ENCODE measurements at regions of chr4 and their contacts with region 1.

Region 1: DNA sequence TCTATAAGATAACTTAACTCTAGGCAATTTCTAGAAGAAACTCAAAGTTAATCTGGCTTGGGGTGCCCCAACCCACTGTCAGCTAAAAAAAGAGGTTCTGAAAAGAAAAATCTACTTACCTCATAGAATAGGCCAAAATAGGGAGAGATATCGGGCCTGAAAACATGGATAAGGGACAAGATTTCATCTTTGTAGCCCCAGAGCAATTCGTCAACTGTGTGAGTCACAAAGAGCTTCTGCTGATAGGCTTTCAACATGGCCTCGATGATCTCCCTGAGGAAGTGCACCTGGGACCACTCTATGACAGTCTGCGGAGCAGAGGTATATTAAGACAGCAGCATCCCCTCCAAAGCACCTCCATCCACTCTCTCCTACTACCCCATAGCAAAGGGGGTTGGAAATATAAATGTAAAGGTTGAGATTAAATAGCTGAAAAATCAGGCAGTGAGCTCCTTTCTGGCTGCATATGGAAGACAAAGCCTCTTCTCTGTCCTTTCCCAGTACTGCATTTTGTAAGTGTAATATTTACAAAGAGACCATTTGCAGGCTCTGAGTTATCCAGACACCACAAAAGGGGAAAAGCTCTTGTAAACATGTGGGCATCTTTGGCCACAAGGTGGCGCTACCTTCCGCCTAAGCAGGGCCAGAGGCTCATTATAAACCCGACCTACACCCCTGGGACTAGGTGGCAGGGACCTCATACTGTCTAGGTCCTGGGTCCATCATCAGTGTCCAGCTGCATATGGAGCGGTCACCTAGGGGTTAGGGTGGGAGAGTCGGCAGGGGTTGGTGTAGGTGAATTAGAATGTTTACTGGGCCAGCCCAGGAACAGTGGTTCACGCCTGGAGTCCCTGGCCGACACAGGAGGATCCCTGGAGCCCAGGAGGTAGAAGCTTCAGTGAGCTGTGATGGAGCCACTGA is 31.5 kb upstream of the NUP54 start:
- DNase-seq: peak; percentile 79
- H3K4me3 ChIP-seq: no peak overlapping the region; a peak in 1 of 4 replicates
- H3K27ac ChIP-seq: no peak overlapping the region; a peak in 1 of 4 replicates
- H3K4me1 ChIP-seq: peaks cover 0 to 2% of the 10 kb centered on the region in 2 experiments; a peak in 1 of 4 replicates
- H3K27me3 ChIP-seq: no peaks in the 10 kb centered on the region
- CTCF ChIP-seq: peak; percentile 95
- EP300 ChIP-seq: no peak
- RAD21 ChIP-seq: peak; percentile 95

Region 2: GRCh38 chr4:76168688-76169087 is 11.0 kb before region 1 on chr4:
- CTCF ChIA-PET with region 1: interaction called, 35 read pairs
- POLR2A ChIA-PET with region 1: no interaction called
- DNase-seq: no peak
- H3K4me3 ChIP-seq: no peak overlapping the region
- H3K27ac ChIP-seq: no peak overlapping the region
- H3K4me1 ChIP-seq: no peaks in the 10 kb centered on the region
- H3K27me3 ChIP-seq: no peaks in the 10 kb centered on the region
- CTCF ChIP-seq: no peak
- EP300 ChIP-seq: no peak
- RAD21 ChIP-seq: no peak

Region 3: DNA sequence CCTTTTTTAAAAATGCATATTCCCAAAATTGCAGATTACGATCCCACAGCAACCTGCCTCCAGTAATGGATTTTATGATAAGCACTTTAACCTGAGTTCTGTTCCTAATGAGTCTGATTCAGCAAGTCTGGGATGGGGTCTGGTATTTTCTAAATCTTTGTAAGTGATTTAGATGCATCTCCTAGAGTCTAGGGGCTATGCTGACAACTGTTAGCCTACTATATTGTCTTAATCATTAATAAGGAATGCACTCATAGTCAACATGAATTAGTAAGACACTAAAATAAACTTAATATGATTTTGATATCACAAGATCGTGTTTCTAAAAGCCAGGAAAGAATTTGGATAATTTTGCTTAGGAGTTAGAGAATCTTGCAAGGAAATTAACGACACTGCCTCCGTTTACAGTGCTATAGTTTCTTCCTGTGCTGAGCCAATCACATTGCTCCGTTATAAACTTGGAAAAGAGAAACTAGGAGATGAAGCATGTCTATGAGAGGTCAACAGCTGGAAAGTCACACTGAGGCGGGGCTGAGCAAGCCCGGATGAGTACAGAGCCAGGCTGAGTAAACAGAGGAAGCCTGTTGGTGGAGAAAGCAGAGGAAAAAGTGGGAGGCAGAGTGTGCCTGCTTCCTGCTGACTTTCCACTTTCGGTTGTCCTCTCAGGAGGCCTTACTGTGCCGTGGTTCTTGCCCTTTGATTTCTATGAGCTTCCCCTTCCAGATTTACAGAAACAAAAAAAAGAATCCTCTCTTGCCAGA is 28.5 kb after region 1 on chr4:
- CTCF ChIA-PET with region 1: interaction called, 65 read pairs
- POLR2A ChIA-PET with region 1: interaction called, 4 read pairs
- DNase-seq: peak; percentile 32
- H3K4me3 ChIP-seq: peak overlapping the region; percentile 23 to 57
- H3K27ac ChIP-seq: peak overlapping the region; percentile 91 to 96
- H3K4me1 ChIP-seq: peaks cover 25 to 49% of the 10 kb centered on the region in 2 experiments; a peak in 3 of 4 replicates
- H3K27me3 ChIP-seq: no peaks in the 10 kb centered on the region
- CTCF ChIP-seq: no peak
- EP300 ChIP-seq: peak; percentile 37 to 39; a peak in 2 of 4 replicates
- RAD21 ChIP-seq: no peak

Region 4: GRCh38 chr4:76235915-76236314 is 56.3 kb after region 1 on chr4:
- CTCF ChIA-PET with region 1: interaction called, 13 read pairs
- POLR2A ChIA-PET with region 1: no interaction called
- DNase-seq: no peak
- H3K4me3 ChIP-seq: no peak overlapping the region
- H3K27ac ChIP-seq: no peak overlapping the region
- H3K4me1 ChIP-seq: peaks cover 0 to 8% of the 10 kb centered on the region in 2 experiments; a peak in 2 of 4 replicates
- H3K27me3 ChIP-seq: no peaks in the 10 kb centered on the region
- CTCF ChIP-seq: no peak
- EP300 ChIP-seq: no peak
- RAD21 ChIP-seq: no peak

Region 5: GRCh38 chr4:76270244-76271175 is 90.9 kb after region 1 on chr4:
- CTCF ChIA-PET with region 1: interaction called, 10 read pairs
- POLR2A ChIA-PET with region 1: no interaction called
- DNase-seq: no peak
- H3K4me3 ChIP-seq: no peak overlapping the region
- H3K27ac ChIP-seq: no peak overlapping the region
- H3K4me1 ChIP-seq: no peaks in the 10 kb centered on the region
- H3K27me3 ChIP-seq: no peaks in the 10 kb centered on the region; the same call in 1 of the 2 replicates
- CTCF ChIP-seq: no peak
- EP300 ChIP-seq: no peak
- RAD21 ChIP-seq: no peak

Region 6: DNA sequence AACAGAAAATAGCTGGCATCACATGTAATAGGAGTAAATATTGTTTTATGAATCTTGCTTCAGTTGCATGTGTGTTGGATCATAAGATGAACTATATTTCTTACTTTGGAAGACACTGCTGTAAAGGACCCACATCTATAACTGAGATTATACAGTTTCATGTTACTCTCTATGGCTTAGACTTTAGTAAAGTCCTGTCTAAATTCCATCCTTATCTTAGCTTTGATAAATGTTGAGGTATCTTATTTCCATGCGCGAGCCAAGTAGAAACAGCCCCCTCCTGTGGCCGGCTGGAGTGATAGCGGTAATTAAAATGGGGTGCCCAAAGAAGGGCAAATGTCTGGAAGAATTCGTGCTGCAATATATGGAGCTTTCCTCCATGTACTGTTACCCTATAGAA is 198.3 kb after region 1 on chr4:
- CTCF ChIA-PET with region 1: interaction called, 160 read pairs
- POLR2A ChIA-PET with region 1: interaction called, 3 read pairs
- DNase-seq: peak; percentile 58
- H3K4me3 ChIP-seq: no peak overlapping the region; a peak in 1 of 4 replicates
- H3K27ac ChIP-seq: no peak overlapping the region
- H3K4me1 ChIP-seq: peaks cover 0 to 7% of the 10 kb centered on the region in 2 experiments; a peak in 2 of 4 replicates
- H3K27me3 ChIP-seq: no peaks in the 10 kb centered on the region
- CTCF ChIP-seq: peak; percentile 70
- EP300 ChIP-seq: no peak
- RAD21 ChIP-seq: peak; percentile 85

Region 7: GRCh38 chr4:76504613-76505465 is 325.2 kb after region 1 on chr4:
- CTCF ChIA-PET with region 1: interaction called, 25 read pairs
- POLR2A ChIA-PET with region 1: no interaction called
- DNase-seq: peak; percentile 44
- H3K4me3 ChIP-seq: no peak overlapping the region; a peak in 1 of 4 replicates
- H3K27ac ChIP-seq: no peak overlapping the region
- H3K4me1 ChIP-seq: no peaks in the 10 kb centered on the region
- H3K27me3 ChIP-seq: no peaks in the 10 kb centered on the region; the same call in 1 of the 2 replicates
- CTCF ChIP-seq: peak; percentile 83
- EP300 ChIP-seq: no peak
- RAD21 ChIP-seq: peak; percentile 79